ENCODE measurements at regions of chr6 and their contacts with region 1.

Region 1: GRCh38 chr6:139895205-139895793 is 520.9 kb upstream of the CITED2 start:
- DNase-seq: no peak
- H3K4me3 ChIP-seq: no peak overlapping the region
- H3K4me3 Mint-ChIP-seq: no peak overlapping the region
- H3K27ac ChIP-seq: no peak overlapping the region
- H3K27ac Mint-ChIP-seq: no peak overlapping the region
- H3K4me1 ChIP-seq: no peaks in the 10 kb centered on the region
- H3K4me1 Mint-ChIP-seq: no peaks in the 10 kb centered on the region
- H3K27me3 ChIP-seq: no peaks in the 10 kb centered on the region
- H3K27me3 Mint-ChIP-seq: peaks cover 3 to 12% of the 10 kb centered on the region in 2 donors

Region 2: GRCh38 chr6:139369568-139370282 is 525.6 kb before region 1 on chr6:
- CTCF ChIA-PET with region 1: interaction called, 11 read pairs
- POLR2A ChIA-PET with region 1: interaction called, 4 read pairs
- DNase-seq: peak in 2 of 5 donors; percentile 46 to 47
- H3K4me3 ChIP-seq: peak overlapping the region; percentile 23
- H3K4me3 Mint-ChIP-seq: peak overlapping the region; percentile 54 to 100 (median 84)
- H3K27ac ChIP-seq: no peak overlapping the region
- H3K27ac Mint-ChIP-seq: peak overlapping the region; percentile 65 to 100 (median 90)
- H3K4me1 ChIP-seq: peaks cover 38% of the 10 kb centered on the region
- H3K4me1 Mint-ChIP-seq: peaks cover 30 to 53% (median 42%) of the 10 kb centered on the region in 3 donors
- H3K27me3 ChIP-seq: no peaks in the 10 kb centered on the region
- H3K27me3 Mint-ChIP-seq: peaks cover 0 to 4% of the 10 kb centered on the region in 2 donors

Region 3: GRCh38 chr6:139881728-139882211 is 13.5 kb before region 1 on chr6:
- CTCF ChIA-PET with region 1: interaction called, 10 read pairs
- POLR2A ChIA-PET with region 1: no interaction called
- DNase-seq: no peak
- H3K4me3 ChIP-seq: no peak overlapping the region
- H3K4me3 Mint-ChIP-seq: no peak overlapping the region
- H3K27ac ChIP-seq: no peak overlapping the region
- H3K27ac Mint-ChIP-seq: no peak overlapping the region
- H3K4me1 ChIP-seq: no peaks in the 10 kb centered on the region
- H3K4me1 Mint-ChIP-seq: no peaks in the 10 kb centered on the region
- H3K27me3 ChIP-seq: no peaks in the 10 kb centered on the region
- H3K27me3 Mint-ChIP-seq: peaks cover 2 to 21% of the 10 kb centered on the region in 2 donors

Region 4: GRCh38 chr6:140193269-140193668 is 298.0 kb after region 1 on chr6:
- CTCF ChIA-PET with region 1: no interaction called
- POLR2A ChIA-PET with region 1: no interaction called
- DNase-seq: peak in 1 of 5 donors; percentile 2
- H3K4me3 ChIP-seq: no peak overlapping the region
- H3K4me3 Mint-ChIP-seq: no peak overlapping the region
- H3K27ac ChIP-seq: no peak overlapping the region
- H3K27ac Mint-ChIP-seq: no peak overlapping the region
- H3K4me1 ChIP-seq: no peaks in the 10 kb centered on the region
- H3K4me1 Mint-ChIP-seq: no peaks in the 10 kb centered on the region
- H3K27me3 ChIP-seq: no peaks in the 10 kb centered on the region
- H3K27me3 Mint-ChIP-seq: peaks cover 2 to 5% of the 10 kb centered on the region in 2 donors

Measured in CD8-positive, alpha-beta memory T cell (primary cell).